GM10248 (cell line): ENCODE measurements at regions of chr4 and their contacts with region 1.

Region 1: DNA sequence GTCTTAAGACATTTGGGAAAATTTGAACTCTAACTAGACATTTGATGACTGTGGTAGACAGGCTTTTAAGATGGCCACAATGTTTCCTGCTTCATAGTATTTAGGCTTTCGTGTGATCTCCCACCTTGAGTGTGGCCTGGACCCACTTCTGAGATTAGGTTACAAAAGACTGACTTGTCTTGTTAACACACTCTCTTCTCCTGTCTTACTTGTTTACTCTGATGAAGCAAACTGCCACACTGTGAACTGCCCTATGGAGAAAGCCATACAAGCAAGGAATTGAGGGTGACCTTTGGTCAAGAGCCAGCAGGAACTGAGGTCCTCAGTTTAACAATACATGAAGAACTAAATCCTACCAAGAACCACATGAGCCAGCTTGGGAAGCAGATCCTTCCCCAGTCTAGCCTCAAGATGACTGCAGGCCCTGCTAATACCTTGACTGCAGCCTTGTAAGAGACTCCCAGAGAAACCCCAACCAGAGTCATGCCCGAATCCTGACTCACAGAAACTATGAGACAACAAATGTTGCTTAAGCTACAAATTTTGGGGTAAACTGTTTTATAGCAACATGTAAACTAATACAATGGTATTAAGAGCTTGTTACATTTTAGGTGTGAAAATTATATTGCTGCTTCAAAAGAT is 20.3 kb downstream of the UBA6 start:
- DNase-seq: no peak
- CTCF ChIP-seq: no peak

Region 2: GRCh38 chr4:67700738-67701516 is 20.2 kb after region 1 on chr4 and contains the start of gene UBA6:
- CTCF ChIA-PET with region 1: interaction called, 10 read pairs
- POLR2A ChIA-PET with region 1: no interaction called
- DNase-seq: peak; percentile 97
- CTCF ChIP-seq: peak; percentile 56